ENCODE measurements at regions of chr15 and their contacts with region 1.

Region 1: GRCh38 chr15:85485956-85486567 is 105.7 kb downstream of the AKAP13 start:
- DNase-seq: peak in 8 of 9 experiments; percentile 43 to 85 (median 59)
- ATAC-seq: peak; percentile 86
- H3K4me3 ChIP-seq: no peak overlapping the region
- H3K4me3 Mint-ChIP-seq: no peak overlapping the region
- H3K27ac ChIP-seq: no peak overlapping the region
- H3K27ac Mint-ChIP-seq: no peak overlapping the region
- H3K4me1 ChIP-seq: peaks cover 35% of the 10 kb centered on the region
- H3K4me1 Mint-ChIP-seq: peaks cover 71% of the 10 kb centered on the region
- H3K27me3 ChIP-seq: no peaks in the 10 kb centered on the region
- H3K27me3 Mint-ChIP-seq: no peaks in the 10 kb centered on the region
- CTCF ChIP-seq: peak; percentile 92

Region 2: GRCh38 chr15:85116925-85117680 is 369.0 kb before region 1 on chr15:
- CTCF ChIA-PET with region 1: no interaction called
- POLR2A ChIA-PET with region 1: no interaction called
- intact Hi-C with region 1: no loop called
- DNase-seq: peak in 1 of 9 experiments; percentile 25
- ATAC-seq: no peak
- H3K4me3 ChIP-seq: no peak overlapping the region
- H3K4me3 Mint-ChIP-seq: no peak overlapping the region
- H3K27ac ChIP-seq: no peak overlapping the region
- H3K27ac Mint-ChIP-seq: no peak overlapping the region
- H3K4me1 ChIP-seq: no peaks in the 10 kb centered on the region
- H3K4me1 Mint-ChIP-seq: no peaks in the 10 kb centered on the region
- H3K27me3 ChIP-seq: no peaks in the 10 kb centered on the region
- H3K27me3 Mint-ChIP-seq: no peaks in the 10 kb centered on the region
- CTCF ChIP-seq: no peak

Region 3: GRCh38 chr15:85412956-85413854 is 72.9 kb before region 1 on chr15:
- CTCF ChIA-PET with region 1: no interaction called
- POLR2A ChIA-PET with region 1: no interaction called
- intact Hi-C with region 1: loop called in 1 of 2 experiments (anchors 10 kb)
- DNase-seq: peak; percentile 42 to 86 (median 75)
- ATAC-seq: peak; percentile 95
- H3K4me3 ChIP-seq: peak overlapping the region in 1 of 2 experiments; percentile 12
- H3K4me3 Mint-ChIP-seq: peak overlapping the region; percentile 56
- H3K27ac ChIP-seq: peak overlapping the region in 1 of 2 experiments; percentile 77
- H3K27ac Mint-ChIP-seq: peak overlapping the region; percentile 89
- H3K4me1 ChIP-seq: peaks cover 26% of the 10 kb centered on the region
- H3K4me1 Mint-ChIP-seq: peaks cover 65% of the 10 kb centered on the region
- H3K27me3 ChIP-seq: no peaks in the 10 kb centered on the region
- H3K27me3 Mint-ChIP-seq: no peaks in the 10 kb centered on the region
- CTCF ChIP-seq: no peak

Region 4: DNA sequence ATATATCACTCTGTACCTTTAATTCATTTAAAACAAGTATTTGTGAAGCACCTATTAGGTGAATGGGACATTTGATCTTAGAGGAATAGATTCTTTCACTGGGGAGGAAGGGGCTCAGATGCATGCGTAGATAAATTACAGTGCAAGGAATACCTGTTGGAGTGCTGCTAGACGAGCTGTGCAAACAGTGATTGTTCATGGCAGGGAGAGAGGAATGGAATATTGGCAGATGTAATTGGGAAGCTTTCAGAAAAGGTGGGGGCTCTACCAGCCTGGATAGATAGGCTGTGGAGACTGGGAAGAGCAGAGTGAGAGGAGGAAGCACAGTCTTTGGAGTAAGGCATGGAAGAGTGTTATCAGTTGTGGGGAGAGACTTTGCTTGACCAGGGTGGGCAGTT is 11.1 kb after region 1 on chr15:
- CTCF ChIA-PET with region 1: interaction called, 7 read pairs
- POLR2A ChIA-PET with region 1: no interaction called
- intact Hi-C with region 1: loop called (anchors 1 to 2 kb)
- DNase-seq: no peak
- ATAC-seq: no peak
- H3K4me3 ChIP-seq: no peak overlapping the region
- H3K4me3 Mint-ChIP-seq: no peak overlapping the region
- H3K27ac ChIP-seq: no peak overlapping the region
- H3K27ac Mint-ChIP-seq: no peak overlapping the region
- H3K4me1 ChIP-seq: peaks cover 47% of the 10 kb centered on the region
- H3K4me1 Mint-ChIP-seq: peaks cover 85% of the 10 kb centered on the region
- H3K27me3 ChIP-seq: no peaks in the 10 kb centered on the region
- H3K27me3 Mint-ChIP-seq: no peaks in the 10 kb centered on the region
- CTCF ChIP-seq: no peak

Region 5: GRCh38 chr15:85582131-85583079 is 96.3 kb after region 1 on chr15:
- CTCF ChIA-PET with region 1: no interaction called
- POLR2A ChIA-PET with region 1: no interaction called
- intact Hi-C with region 1: loop called in 1 of 2 experiments (anchors 5 kb)
- DNase-seq: peak; percentile 24 to 84 (median 75)
- ATAC-seq: peak; percentile 71
- H3K4me3 ChIP-seq: peak overlapping the region; percentile 54 to 57
- H3K4me3 Mint-ChIP-seq: peak overlapping the region; percentile 84
- H3K27ac ChIP-seq: peak overlapping the region; percentile 88 to 93
- H3K27ac Mint-ChIP-seq: peak overlapping the region; percentile 95
- H3K4me1 ChIP-seq: peaks cover 50% of the 10 kb centered on the region
- H3K4me1 Mint-ChIP-seq: peaks cover 75% of the 10 kb centered on the region
- H3K27me3 ChIP-seq: no peaks in the 10 kb centered on the region
- H3K27me3 Mint-ChIP-seq: no peaks in the 10 kb centered on the region
- CTCF ChIP-seq: no peak

Region 6: DNA sequence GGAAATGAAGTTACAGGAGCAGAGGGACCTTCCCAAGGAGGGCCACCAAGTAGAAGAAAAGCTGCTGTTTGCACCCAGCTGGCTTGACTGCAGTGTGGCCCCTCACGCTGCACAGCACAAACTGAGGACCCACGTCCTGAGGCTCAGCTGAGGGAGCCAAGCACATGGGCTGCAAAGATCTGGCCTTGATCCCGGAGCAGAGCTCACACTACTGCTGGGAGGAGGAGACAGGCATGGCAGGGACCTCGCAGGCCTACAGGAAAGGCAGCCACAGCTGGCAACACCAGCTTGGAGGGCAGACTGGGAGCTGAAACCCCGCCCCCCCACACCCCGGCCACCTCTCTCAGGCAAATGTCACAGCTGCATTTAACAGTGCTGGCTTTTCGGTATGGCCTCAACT is 268.9 kb after region 1 on chr15:
- CTCF ChIA-PET with region 1: no interaction called
- POLR2A ChIA-PET with region 1: no interaction called
- intact Hi-C with region 1: no loop called
- DNase-seq: no peak
- ATAC-seq: no peak
- H3K4me3 ChIP-seq: no peak overlapping the region
- H3K4me3 Mint-ChIP-seq: no peak overlapping the region
- H3K27ac ChIP-seq: no peak overlapping the region
- H3K27ac Mint-ChIP-seq: no peak overlapping the region
- H3K4me1 ChIP-seq: peaks cover 26% of the 10 kb centered on the region
- H3K4me1 Mint-ChIP-seq: peaks cover 37% of the 10 kb centered on the region
- H3K27me3 ChIP-seq: no peaks in the 10 kb centered on the region
- H3K27me3 Mint-ChIP-seq: no peaks in the 10 kb centered on the region
- CTCF ChIP-seq: no peak

Region 7: GRCh38 chr15:85840065-85840801 is 354.2 kb after region 1 on chr15:
- CTCF ChIA-PET with region 1: interaction called, 4 read pairs
- POLR2A ChIA-PET with region 1: no interaction called
- intact Hi-C with region 1: loop called (anchors 1 to 2 kb)
- DNase-seq: peak; percentile 62 to 90 (median 79)
- ATAC-seq: peak; percentile 94
- H3K4me3 ChIP-seq: peak overlapping the region; percentile 27 to 33
- H3K4me3 Mint-ChIP-seq: peak overlapping the region; percentile 68
- H3K27ac ChIP-seq: no peak overlapping the region
- H3K27ac Mint-ChIP-seq: no peak overlapping the region
- H3K4me1 ChIP-seq: peaks cover 4% of the 10 kb centered on the region
- H3K4me1 Mint-ChIP-seq: no peaks in the 10 kb centered on the region
- H3K27me3 ChIP-seq: no peaks in the 10 kb centered on the region
- H3K27me3 Mint-ChIP-seq: peaks cover 5% of the 10 kb centered on the region
- CTCF ChIP-seq: peak; percentile 93

Measured in CD8-positive, alpha-beta T cell (primary cell).